ENCODE measurements at regions of chr10 and their contacts with region 1.

Region 1: DNA sequence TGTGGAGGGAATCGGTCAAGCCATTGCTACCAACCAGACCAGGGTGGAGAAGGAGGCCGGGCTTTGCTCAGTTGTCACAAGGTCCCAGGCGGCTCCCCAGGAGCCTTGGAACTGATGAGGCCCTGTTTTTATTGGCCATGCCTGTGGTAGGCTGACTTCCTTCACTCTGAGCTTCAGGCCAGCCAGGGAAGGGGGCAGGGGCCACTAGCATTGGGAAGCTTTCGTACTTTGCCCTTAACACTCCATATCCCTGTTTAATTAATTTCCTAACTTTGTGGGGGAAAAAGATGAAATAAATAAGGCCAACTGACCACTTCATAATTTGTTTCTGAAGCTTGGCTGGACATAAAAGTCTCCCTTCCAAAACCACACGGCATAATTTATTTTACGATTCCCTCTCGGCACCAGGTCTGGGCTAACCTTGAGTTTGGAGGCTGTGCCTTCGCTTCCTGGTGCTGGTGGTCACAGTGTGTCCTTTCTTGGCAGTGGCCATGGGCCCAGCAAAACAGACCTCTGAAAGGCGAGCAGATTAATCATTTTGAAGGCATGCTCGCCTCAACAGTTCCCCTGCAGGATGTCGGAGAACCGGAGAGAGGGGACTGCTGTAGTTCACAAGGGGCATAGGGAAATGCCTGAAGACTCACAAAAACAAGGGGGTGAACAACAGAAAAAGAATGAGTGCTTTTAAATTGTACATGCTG is 965.9 kb downstream of the LRMDA start:
- DNase-seq: peak; percentile 86 to 87
- ATAC-seq: peak; percentile 89
- H3K4me3 ChIP-seq: no peak overlapping the region
- H3K27ac ChIP-seq: peak overlapping the region; percentile 92 to 99
- H3K4me1 ChIP-seq: peaks cover 13 to 37% of the 10 kb centered on the region in 2 donors
- H3K27me3 ChIP-seq: no peaks in the 10 kb centered on the region

Region 2: GRCh38 chr10:76091926-76092325 is 305.4 kb before region 1 on chr10:
- intact Hi-C with region 1: no loop called
- DNase-seq: no peak
- ATAC-seq: no peak
- H3K4me3 ChIP-seq: no peak overlapping the region
- H3K27ac ChIP-seq: no peak overlapping the region
- H3K4me1 ChIP-seq: no peaks in the 10 kb centered on the region
- H3K27me3 ChIP-seq: no peaks in the 10 kb centered on the region

Region 3: DNA sequence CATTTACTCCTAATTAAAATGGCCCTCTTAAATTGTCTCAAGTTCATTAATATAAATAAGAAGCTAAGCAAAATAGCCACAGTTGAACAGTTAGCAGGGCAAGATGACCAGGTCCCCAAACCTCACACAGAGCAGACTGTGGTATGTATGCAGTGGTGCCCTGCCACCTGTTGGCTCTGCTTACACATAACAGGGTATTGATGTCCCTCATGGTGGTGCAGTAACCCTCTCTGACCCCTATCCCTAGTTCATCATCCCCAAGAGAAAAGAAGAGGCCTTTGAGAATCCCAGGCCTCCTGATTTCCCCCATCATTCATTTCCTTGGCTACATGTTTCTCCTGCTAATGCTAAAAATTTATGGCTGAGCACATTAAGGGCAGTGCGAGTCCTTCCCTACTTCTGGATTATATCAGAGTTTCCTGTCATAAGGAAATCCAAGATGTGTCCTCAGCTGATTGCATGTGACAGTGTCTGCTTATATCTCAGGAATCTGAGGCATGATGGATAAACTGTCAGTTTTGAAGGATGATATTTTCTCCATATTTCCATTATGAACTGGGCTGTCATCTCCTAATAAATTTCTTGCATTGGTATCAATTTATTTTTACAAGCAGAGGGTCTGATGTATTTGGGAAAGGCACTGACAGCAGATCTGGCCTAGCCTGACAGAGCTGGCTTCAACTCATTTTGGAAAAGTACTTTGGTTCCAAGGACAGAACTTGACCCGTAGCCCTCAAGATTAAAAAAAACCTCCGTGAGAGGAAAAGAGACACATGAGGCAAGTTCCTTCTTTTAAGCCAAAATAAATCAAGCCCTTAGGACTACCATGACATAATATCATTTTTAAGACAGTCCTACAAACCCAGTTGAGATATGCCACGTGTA is 85.3 kb before region 1 on chr10:
- intact Hi-C with region 1: loop called in 1 of 2 experiments (anchors 2 kb)
- DNase-seq: no peak
- ATAC-seq: peak; percentile 46
- H3K4me3 ChIP-seq: no peak overlapping the region
- H3K27ac ChIP-seq: peak overlapping the region; percentile 74 to 93
- H3K4me1 ChIP-seq: peaks cover 6 to 11% of the 10 kb centered on the region in 2 donors
- H3K27me3 ChIP-seq: no peaks in the 10 kb centered on the region

Region 4: DNA sequence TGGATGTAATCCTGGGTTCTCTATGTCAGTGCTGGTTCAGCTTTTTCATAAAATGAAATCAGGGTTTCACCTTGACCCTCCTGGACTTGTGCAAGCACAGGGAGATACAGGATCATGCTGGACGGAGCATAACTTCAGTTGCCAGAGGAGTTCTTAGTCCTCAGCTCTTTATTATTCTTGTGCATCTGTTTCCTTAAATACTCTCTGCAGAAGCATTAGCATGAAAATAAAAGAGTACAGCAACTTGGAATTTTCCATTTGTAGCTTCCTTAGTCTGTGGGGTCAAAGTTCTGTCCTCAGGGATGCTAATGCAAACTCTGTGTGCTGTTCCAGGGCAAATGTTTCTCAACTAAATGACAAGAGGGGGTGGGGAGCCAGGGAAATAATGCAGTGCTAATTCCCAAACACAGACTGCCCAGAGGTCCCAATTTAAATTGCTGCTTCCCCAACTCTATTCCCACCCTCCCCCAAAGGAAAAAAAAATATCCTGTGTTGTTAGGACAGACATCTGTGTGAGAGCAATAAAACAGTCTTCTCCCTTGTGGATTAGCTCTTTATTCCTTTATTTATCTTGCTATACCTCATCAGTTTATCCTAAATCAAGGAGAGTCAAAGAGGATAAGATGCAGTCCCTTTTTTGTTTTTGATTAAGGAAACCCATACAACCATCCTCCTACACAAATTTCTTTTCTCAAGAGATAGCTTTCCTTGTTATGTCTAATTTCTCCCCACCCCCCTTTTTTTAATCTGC is 60.9 kb before region 1 on chr10:
- intact Hi-C with region 1: loop called in 1 of 2 experiments (anchors 5 kb)
- DNase-seq: no peak
- ATAC-seq: no peak
- H3K4me3 ChIP-seq: no peak overlapping the region
- H3K27ac ChIP-seq: no peak overlapping the region
- H3K4me1 ChIP-seq: no peaks in the 10 kb centered on the region
- H3K27me3 ChIP-seq: no peaks in the 10 kb centered on the region

Region 5: DNA sequence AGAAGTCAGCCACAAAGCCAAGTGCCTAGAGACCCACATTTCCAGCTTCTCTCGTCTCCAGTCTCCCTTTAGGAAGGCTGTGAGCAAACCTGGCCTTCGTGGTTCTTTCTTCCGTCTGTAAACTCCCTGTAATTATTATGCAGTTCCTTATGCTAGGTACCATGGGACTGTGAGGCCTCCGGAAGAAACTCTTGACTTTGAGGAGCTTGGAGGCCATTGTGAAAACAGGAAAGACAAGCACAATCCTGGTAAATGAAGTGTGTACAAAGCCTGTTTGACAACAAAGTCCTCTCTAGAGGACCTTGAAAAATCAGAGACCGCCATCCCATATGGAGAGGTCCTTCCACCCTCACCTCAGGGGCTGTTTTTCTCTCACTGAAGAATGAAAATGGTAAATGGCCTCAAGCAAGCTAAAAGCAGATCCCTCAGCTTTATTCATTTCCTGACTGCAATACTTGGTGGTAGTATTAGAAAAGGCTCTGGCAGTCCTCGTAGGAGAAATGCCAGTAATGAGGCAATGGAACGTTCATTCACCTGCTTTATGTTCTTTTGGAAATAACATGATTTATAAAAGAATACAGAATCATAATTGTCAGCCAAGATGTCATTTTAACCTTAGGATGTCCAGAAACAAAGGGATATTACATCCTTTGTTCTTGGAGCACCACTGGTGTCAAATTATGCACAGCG is 39.5 kb before region 1 on chr10:
- intact Hi-C with region 1: no loop called
- DNase-seq: no peak
- ATAC-seq: no peak
- H3K4me3 ChIP-seq: no peak overlapping the region
- H3K27ac ChIP-seq: no peak overlapping the region
- H3K4me1 ChIP-seq: no peaks in the 10 kb centered on the region
- H3K27me3 ChIP-seq: no peaks in the 10 kb centered on the region

Region 6: DNA sequence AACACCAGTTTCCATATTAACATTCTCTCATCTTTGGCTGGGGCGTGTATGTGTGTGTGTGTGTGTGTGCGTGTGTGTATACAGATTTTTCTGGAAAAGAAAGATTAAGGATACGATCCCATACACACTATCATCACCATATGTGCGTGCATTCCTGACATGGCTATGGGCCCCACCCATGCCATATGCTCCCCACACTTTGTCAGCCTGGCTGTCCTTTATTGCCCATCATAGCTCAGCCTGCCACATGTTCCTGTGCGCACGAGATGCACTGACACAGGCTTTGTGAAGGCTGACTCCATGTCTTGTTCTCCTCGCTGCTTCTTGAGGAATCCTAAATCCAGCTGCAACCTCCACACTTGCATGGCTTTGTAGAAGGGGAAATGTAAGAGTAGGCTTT is 18.2 kb after region 1 on chr10:
- intact Hi-C with region 1: no loop called
- DNase-seq: no peak
- ATAC-seq: no peak
- H3K4me3 ChIP-seq: no peak overlapping the region
- H3K27ac ChIP-seq: peak overlapping the region in 1 of 2 donors; percentile 34
- H3K4me1 ChIP-seq: peaks cover 0 to 6% of the 10 kb centered on the region in 2 donors
- H3K27me3 ChIP-seq: no peaks in the 10 kb centered on the region

Region 7: GRCh38 chr10:76547352-76547972 is 150.1 kb after region 1 on chr10:
- intact Hi-C with region 1: loop called in 1 of 2 experiments (anchors 5 kb)
- DNase-seq: peak; percentile 83 to 84
- ATAC-seq: peak; percentile 72
- H3K4me3 ChIP-seq: no peak overlapping the region
- H3K27ac ChIP-seq: no peak overlapping the region
- H3K4me1 ChIP-seq: no peaks in the 10 kb centered on the region
- H3K27me3 ChIP-seq: no peaks in the 10 kb centered on the region

Region 8: GRCh38 chr10:76675951-76676587 is 278.7 kb after region 1 on chr10:
- intact Hi-C with region 1: loop called in 1 of 2 experiments (anchors 10 kb)
- DNase-seq: peak; percentile 88 to 92
- ATAC-seq: peak; percentile 94
- H3K4me3 ChIP-seq: no peak overlapping the region
- H3K27ac ChIP-seq: peak overlapping the region; percentile 68 to 100
- H3K4me1 ChIP-seq: peaks cover 4 to 6% of the 10 kb centered on the region in 2 donors
- H3K27me3 ChIP-seq: no peaks in the 10 kb centered on the region